Heart left ventricle (tissue), 16 donors: ENCODE measurements at regions of chr7 and their contacts with region 1.

Region 1: DNA sequence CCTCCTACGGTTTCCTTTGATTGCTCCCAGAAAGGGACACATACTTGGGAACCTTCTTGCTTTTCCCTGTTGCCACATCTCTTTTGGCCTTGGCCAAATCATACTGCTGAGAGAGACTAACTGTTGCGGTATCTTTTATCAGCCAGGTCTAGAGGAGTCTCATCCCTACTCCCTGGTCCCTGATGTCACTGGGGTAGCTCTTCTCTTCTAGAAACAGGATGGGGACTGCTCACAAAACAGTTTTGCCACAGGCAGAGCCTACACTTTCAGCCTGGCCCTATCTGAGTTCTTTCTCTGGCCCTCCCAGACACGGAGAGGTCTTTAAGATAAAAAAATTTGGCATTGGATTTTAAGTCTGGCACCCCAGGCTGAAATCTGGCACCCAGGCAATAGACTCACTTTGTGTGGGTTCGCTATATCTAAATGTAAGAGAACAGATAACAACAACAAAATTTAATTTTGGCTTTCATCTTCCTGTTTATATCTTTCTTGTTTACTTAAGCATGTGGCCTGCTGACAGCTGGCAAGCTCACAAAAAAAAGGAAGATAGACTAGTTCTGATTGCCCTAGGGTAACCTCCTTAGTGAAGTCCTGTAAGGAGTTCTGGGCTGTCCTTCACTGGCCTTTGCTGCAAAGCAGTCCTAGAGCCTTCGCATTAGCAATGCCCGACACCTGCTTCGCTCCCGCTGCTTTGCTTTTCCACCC is 228.3 kb upstream of the NPVF start:
- DNase-seq: peak in 3 of 5 donors; percentile 17 to 37 (median 25)
- ATAC-seq: peak; percentile 45 to 62 (median 61)
- H3K4me3 ChIP-seq: no peak overlapping the region
- H3K27ac ChIP-seq: peak overlapping the region in 11 of 12 donors; percentile 6 to 75 (median 31)
- H3K4me1 ChIP-seq: peaks cover 0 to 42% (median 11%) of the 10 kb centered on the region in 12 donors
- H3K27me3 ChIP-seq: peaks cover 0 to 4% (median 0%) of the 10 kb centered on the region in 9 donors
- CTCF ChIP-seq: no peak
- POLR2A ChIP-seq: no peak

Region 2: GRCh38 chr7:25495342-25496250 is 39.0 kb after region 1 on chr7:
- intact Hi-C with region 1: loop called in 1 of 10 experiments (anchors 2 kb)
- DNase-seq: peak in 3 of 5 donors; percentile 13 to 50 (median 28)
- ATAC-seq: peak in 2 of 4 donors; percentile 73 to 79
- H3K4me3 ChIP-seq: no peak overlapping the region
- H3K27ac ChIP-seq: peak overlapping the region in 11 of 12 donors; percentile 29 to 71 (median 58)
- H3K4me1 ChIP-seq: peaks cover 0 to 29% (median 16%) of the 10 kb centered on the region in 12 donors
- H3K27me3 ChIP-seq: no peaks in the 10 kb centered on the region
- CTCF ChIP-seq: no peak
- POLR2A ChIP-seq: no peak

Region 3: DNA sequence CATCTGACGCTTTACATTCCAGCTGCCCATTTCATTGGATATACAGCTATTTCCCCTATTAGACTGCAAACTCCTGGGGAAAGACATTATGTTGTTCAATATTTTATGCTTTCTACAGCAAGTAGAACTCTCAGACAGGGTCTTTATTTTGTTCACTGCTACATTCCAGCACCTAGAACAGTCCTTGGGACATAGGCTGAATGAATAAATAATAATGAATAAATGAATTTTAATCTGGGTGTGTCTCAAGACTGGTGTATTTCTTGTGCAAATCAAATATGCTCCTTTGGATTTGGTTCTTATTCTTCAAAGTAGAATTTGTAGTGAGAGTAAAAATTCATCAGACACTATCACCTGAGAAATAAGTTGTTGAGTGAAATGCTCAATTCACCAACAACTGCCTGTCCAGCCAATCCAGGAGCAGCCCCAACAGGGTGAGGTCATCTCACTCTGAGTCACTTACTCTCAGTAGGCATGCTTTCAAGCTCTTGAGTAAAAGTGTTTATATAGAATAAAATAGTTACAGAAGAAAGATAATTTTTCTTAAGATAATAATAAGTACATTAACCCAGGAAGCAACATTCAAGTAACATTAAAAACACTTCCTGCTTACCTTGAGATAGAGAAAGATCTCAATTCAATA is 59.1 kb after region 1 on chr7:
- intact Hi-C with region 1: loop called in 1 of 10 experiments (anchors 10 kb)
- DNase-seq: no peak
- ATAC-seq: no peak
- H3K4me3 ChIP-seq: no peak overlapping the region
- H3K27ac ChIP-seq: no peak overlapping the region
- H3K4me1 ChIP-seq: no peaks in the 10 kb centered on the region
- H3K27me3 ChIP-seq: peaks cover 0 to 2% (median 0%) of the 10 kb centered on the region in 9 donors
- CTCF ChIP-seq: no peak
- POLR2A ChIP-seq: no peak